ENCODE measurements at regions of chr20 and their contacts with region 1.

Region 1: DNA sequence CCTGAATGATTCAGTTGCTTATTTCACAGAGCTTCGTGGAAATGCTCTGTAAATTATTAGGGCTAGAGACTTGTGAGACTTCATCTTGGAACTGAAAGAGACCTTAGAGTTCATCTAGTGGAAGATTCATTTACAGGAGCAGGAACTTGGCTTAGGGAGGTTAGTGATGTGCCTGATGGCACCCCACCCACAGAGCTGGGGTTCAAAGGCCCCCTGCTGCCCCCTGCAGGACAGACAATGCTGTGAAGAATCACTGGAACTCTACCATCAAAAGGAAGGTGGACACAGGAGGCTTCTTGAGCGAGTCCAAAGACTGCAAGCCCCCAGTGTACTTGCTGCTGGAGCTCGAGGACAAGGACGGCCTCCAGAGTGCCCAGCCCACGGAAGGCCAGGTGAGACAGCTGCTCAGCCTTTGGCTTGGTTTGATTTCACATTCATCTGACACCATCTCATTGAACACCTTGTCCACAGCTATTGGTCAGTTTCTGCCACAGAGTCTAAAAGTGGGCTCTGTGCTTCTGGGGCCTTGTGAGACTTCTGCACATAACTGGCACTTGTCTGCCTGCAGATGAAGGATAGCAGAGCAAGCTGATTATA is 25.1 kb downstream of the MYBL2 start:
- DNase-seq: peak; percentile 67
- H3K4me3 Mint-ChIP-seq: no peak overlapping the region
- H3K27ac Mint-ChIP-seq: no peak overlapping the region
- H3K4me1 Mint-ChIP-seq: no peaks in the 10 kb centered on the region
- H3K27me3 Mint-ChIP-seq: no peaks in the 10 kb centered on the region

Region 2: DNA sequence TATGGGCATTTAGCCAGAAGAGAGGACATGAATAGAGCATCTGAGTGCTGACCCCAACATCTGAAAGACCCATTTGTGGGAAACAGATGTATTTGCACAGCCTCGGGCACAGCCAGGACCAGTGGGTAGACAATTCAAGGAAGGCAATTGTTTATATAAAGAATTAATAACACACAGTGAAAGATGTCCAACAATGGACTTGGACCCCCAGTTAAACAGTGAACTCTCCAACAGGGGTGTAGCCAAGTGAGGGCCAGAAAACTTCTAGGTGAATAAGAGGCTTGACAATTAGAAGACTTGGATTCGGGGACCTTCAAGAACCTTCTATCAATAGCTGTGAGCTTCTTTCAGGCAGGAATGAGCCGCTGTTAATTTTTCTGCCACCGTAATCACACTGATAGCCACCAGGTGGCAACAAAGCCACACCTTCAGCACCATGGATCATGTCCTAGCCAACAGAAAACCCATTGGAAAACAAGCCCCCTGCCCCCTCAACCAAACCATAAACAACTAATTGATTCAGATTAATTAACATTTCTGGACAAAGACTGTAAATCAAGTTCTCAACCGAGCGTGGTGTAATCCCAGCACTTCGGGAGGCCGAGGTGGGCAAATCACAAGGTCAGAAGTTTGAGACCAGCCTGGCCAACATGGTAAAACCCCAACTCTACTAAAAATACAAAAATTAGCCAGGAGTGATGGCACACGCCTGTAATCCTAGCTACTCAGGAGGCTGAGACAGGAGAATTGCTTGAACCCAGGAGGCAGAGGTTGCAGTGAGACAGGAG is 243.1 kb before region 1 on chr20:
- CTCF ChIA-PET with region 1: interaction called, 15 read pairs
- POLR2A ChIA-PET with region 1: no interaction called
- DNase-seq: peak; percentile 55
- H3K4me3 Mint-ChIP-seq: no peak overlapping the region
- H3K27ac Mint-ChIP-seq: no peak overlapping the region
- H3K4me1 Mint-ChIP-seq: peaks cover 2% of the 10 kb centered on the region
- H3K27me3 Mint-ChIP-seq: peaks cover 12% of the 10 kb centered on the region

Region 3: GRCh38 chr20:43537921-43538877 is 153.8 kb before region 1 on chr20:
- CTCF ChIA-PET with region 1: interaction called, 27 read pairs
- POLR2A ChIA-PET with region 1: no interaction called
- DNase-seq: peak; percentile 50
- H3K4me3 Mint-ChIP-seq: no peak overlapping the region
- H3K27ac Mint-ChIP-seq: no peak overlapping the region
- H3K4me1 Mint-ChIP-seq: no peaks in the 10 kb centered on the region
- H3K27me3 Mint-ChIP-seq: no peaks in the 10 kb centered on the region